Aorta (tissue), 5 donors: ENCODE measurements at regions of chr2 and their contacts with region 1.

Region 1: GRCh38 chr2:212328136-212328535 is 210.5 kb downstream of the ERBB4 start:
- DNase-seq: no peak
- ATAC-seq: no peak
- H3K4me3 ChIP-seq: no peak overlapping the region
- H3K27ac ChIP-seq: no peak overlapping the region
- H3K4me1 ChIP-seq: peaks cover 0 to 10% of the 10 kb centered on the region in 2 donors
- H3K27me3 ChIP-seq: no peaks in the 10 kb centered on the region

Region 2: DNA sequence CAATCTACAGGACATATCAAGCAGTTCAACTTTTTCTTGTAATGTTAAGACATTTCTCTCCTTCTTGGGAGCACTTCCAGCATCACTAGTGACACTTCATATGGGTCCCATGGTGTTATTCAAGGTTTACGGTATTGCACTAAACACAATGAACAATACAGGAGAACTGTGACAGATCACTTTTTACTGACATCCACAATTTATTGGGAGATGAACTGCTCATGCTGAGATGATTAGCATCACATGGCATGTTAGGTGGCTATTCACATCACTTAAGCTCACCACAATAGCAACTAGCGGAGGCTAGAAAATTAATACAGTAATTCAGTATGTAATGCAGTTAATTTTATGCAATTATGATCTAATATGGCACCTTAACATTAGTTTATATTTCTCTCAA is 53.9 kb before region 1 on chr2:
- intact Hi-C with region 1: loop called in 1 of 2 experiments (anchors 10 kb)
- DNase-seq: no peak
- ATAC-seq: no peak
- H3K4me3 ChIP-seq: no peak overlapping the region
- H3K27ac ChIP-seq: no peak overlapping the region
- H3K4me1 ChIP-seq: peaks cover 0 to 3% of the 10 kb centered on the region in 2 donors
- H3K27me3 ChIP-seq: no peaks in the 10 kb centered on the region